ENCODE measurements at regions of chr10 and their contacts with region 1.

Region 1: GRCh38 chr10:21740989-21741388 is 207.0 kb downstream of the MLLT10 start:
- DNase-seq: peak in 7 of 9 donors; percentile 59 to 84 (median 78)
- ATAC-seq: peak; percentile 93
- H3K4me3 ChIP-seq: no peak overlapping the region
- H3K4me3 Mint-ChIP-seq: peak overlapping the region in 9 of 10 donors; percentile 12 to 73 (median 65)
- H3K27ac ChIP-seq: peak overlapping the region; percentile 70
- H3K27ac Mint-ChIP-seq: peak overlapping the region; percentile 76 to 98 (median 92)
- H3K4me1 ChIP-seq: peaks cover 14 to 55% of the 10 kb centered on the region in 2 donors
- H3K4me1 Mint-ChIP-seq: peaks cover 31 to 69% (median 60%) of the 10 kb centered on the region in 7 donors
- H3K27me3 ChIP-seq: no peaks in the 10 kb centered on the region
- H3K27me3 Mint-ChIP-seq: no peaks in the 10 kb centered on the region

Region 2: DNA sequence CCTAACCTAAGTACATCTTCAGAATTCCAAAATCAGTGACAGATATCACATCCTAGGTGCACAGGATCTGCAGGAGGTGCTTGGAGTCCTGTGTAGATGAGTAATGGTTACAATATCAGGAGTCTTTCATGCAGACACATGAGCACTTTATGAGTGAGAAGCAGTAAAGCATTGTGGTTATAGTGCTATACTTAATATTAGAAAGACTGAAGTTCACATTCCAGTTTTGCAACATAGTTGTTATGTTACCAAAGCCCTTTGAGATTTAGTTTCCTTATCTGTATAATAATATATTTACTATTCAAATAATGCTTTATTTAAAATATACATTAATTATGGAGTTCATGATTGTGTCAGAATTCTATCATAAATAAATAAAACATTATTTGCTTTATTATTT is 1360.5 kb before region 1 on chr10:
- CTCF ChIA-PET with region 1: no interaction called
- POLR2A ChIA-PET with region 1: no interaction called
- intact Hi-C with region 1: no loop called
- DNase-seq: no peak
- ATAC-seq: no peak
- H3K4me3 ChIP-seq: no peak overlapping the region
- H3K4me3 Mint-ChIP-seq: no peak overlapping the region
- H3K27ac ChIP-seq: no peak overlapping the region
- H3K27ac Mint-ChIP-seq: no peak overlapping the region
- H3K4me1 ChIP-seq: no peaks in the 10 kb centered on the region
- H3K4me1 Mint-ChIP-seq: peaks cover 0 to 5% (median 0%) of the 10 kb centered on the region in 7 donors
- H3K27me3 ChIP-seq: no peaks in the 10 kb centered on the region
- H3K27me3 Mint-ChIP-seq: no peaks in the 10 kb centered on the region

Region 3: GRCh38 chr10:21702633-21703111 is 38.3 kb before region 1 on chr10:
- CTCF ChIA-PET with region 1: no interaction called
- POLR2A ChIA-PET with region 1: no interaction called
- intact Hi-C with region 1: loop called (anchors 1 to 2 kb)
- DNase-seq: peak in 7 of 9 donors; percentile 33 to 80 (median 72)
- ATAC-seq: peak; percentile 76
- H3K4me3 ChIP-seq: no peak overlapping the region
- H3K4me3 Mint-ChIP-seq: peak overlapping the region; percentile 54 to 77 (median 70)
- H3K27ac ChIP-seq: no peak overlapping the region
- H3K27ac Mint-ChIP-seq: peak overlapping the region; percentile 28 to 90 (median 73)
- H3K4me1 ChIP-seq: peaks cover 14 to 21% of the 10 kb centered on the region in 2 donors
- H3K4me1 Mint-ChIP-seq: peaks cover 26 to 50% (median 44%) of the 10 kb centered on the region in 7 donors
- H3K27me3 ChIP-seq: no peaks in the 10 kb centered on the region
- H3K27me3 Mint-ChIP-seq: peaks cover 0 to 5% (median 0%) of the 10 kb centered on the region in 5 donors

Region 4: DNA sequence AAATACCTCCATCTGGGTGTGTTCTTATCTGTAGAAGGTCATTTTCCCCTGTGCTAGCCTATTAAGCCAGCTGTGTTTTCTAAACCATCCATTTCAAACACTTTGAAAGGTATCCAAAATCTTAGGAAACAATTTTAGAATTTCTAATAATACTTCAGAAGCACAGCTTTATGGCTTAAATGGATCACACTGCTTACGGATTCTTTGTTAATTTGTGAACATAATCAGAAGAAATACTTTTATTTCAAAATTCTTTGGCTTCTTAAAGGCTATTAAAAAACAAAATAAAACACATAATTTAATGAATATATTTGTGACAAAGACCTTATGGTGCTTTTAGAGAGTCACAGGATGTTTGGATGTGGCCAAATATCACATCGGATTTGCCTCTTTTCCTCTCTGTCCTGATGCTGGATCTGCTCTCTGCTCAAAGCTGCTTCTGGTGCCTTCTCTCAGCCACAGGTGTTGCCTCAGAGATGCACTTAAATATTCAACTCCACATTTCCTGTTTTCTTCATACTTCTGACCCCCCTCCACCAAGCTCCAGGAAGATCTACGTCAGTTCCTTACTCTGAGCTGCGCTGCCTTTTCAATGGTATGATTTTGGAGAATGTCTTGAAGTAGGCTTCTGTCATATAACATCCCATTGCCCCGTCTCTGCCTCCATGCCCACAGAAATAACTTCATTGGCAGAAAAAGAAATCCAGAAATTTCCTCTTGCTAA is 23.6 kb after region 1 on chr10:
- CTCF ChIA-PET with region 1: interaction called, 3 read pairs
- POLR2A ChIA-PET with region 1: interaction called, 3 read pairs
- intact Hi-C with region 1: loop called in 1 of 2 experiments (anchors 2 kb)
- DNase-seq: peak in 7 of 9 donors; percentile 55 to 84 (median 78)
- ATAC-seq: peak; percentile 93
- H3K4me3 ChIP-seq: no peak overlapping the region
- H3K4me3 Mint-ChIP-seq: peak overlapping the region; percentile 17 to 78 (median 62)
- H3K27ac ChIP-seq: peak overlapping the region; percentile 56
- H3K27ac Mint-ChIP-seq: peak overlapping the region; percentile 83 to 96 (median 93)
- H3K4me1 ChIP-seq: peaks cover 0 to 17% of the 10 kb centered on the region in 2 donors
- H3K4me1 Mint-ChIP-seq: peaks cover 8 to 30% (median 19%) of the 10 kb centered on the region in 7 donors
- H3K27me3 ChIP-seq: no peaks in the 10 kb centered on the region
- H3K27me3 Mint-ChIP-seq: no peaks in the 10 kb centered on the region